ENCODE measurements at regions of chr4 and their contacts with region 1.

Region 1: DNA sequence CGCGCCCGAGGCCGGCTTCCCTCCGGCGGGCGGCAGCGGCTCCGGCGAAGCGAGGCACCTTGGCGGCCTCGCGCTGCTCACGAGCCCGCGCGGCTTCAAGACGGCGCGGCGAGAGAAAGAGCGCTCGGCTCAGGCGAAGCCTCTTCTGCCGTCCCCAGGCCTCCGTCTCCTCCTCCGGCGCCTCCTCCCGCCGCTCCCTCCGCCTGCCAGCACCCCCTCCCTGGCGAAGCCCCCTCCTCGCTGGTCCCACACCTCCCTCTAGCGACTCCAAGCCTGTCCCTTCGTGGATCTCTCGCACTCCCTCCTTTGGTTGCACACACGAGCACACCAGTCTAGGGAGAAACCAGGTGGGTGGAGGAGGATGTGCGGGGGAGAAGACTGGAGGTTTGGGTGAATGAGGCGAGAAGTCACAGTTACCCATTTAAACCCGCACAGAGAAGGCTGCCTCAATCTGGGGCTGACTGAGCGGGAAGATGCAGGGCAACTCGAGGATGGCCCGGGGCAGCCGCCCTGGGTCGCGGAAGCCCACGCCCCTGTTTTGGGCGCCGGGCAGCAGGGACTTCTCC is at the start of gene CAMK2D:
- DNase-seq: peak; percentile 91
- H3K4me3 ChIP-seq: peak within 1 kb of the TSS; percentile 93 to 98 (median 97)
- H3K27ac ChIP-seq: peak within 1 kb of the TSS; percentile 84
- H3K4me1 ChIP-seq: peaks cover 21% of the 10 kb centered on the region
- H3K27me3 ChIP-seq: no peaks in the 10 kb centered on the region
- CTCF ChIP-seq: peak; percentile 35 to 72
- POLR2A ChIP-seq: peak; percentile 51
- total RNA-seq, gene CAMK2D: 23.0 and 30.7 TPM in 2 replicates

Region 2: DNA sequence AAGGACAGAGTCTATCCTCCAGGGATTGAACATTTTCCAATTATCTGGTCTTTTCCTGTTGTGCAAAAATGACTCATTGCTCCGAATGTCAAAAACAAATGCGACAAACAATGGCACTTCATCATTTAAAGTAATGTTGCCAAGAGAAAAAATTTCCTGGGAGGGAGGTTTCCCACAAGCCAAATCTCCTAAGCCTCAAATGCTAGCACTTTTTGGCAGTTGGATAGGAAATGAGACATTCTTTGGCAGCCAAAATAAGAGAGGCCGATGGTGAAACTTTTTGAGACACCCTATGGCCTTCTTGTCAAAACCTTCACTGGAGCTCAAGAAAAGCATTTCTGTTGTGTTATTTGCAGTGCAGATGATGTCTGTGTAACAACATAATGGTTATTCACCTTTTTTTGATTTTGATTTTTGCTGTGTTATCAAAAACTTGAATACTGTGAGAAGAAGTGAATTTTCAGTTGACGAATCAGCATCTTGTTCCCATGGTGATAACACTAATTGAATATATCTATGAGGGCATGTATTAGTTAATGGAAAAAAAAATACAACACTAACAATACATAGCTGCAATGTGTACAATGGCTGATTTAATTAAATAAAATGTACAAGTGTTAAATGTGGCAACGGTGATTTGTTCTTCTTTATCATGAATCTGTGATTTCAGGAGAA is 378.5 kb before region 1 on chr4:
- CTCF ChIA-PET with region 1: no interaction called
- POLR2A ChIA-PET with region 1: no interaction called
- dilution Hi-C with region 1: no loop called
- intact Hi-C with region 1: loop called (anchors 1 kb)
- DNase-seq: peak; percentile 82
- H3K4me3 ChIP-seq: no peak overlapping the region
- H3K27ac ChIP-seq: peak overlapping the region; percentile 57
- H3K4me1 ChIP-seq: peaks cover 29% of the 10 kb centered on the region
- H3K27me3 ChIP-seq: no peaks in the 10 kb centered on the region
- CTCF ChIP-seq: no peak
- POLR2A ChIP-seq: no peak

Region 3: DNA sequence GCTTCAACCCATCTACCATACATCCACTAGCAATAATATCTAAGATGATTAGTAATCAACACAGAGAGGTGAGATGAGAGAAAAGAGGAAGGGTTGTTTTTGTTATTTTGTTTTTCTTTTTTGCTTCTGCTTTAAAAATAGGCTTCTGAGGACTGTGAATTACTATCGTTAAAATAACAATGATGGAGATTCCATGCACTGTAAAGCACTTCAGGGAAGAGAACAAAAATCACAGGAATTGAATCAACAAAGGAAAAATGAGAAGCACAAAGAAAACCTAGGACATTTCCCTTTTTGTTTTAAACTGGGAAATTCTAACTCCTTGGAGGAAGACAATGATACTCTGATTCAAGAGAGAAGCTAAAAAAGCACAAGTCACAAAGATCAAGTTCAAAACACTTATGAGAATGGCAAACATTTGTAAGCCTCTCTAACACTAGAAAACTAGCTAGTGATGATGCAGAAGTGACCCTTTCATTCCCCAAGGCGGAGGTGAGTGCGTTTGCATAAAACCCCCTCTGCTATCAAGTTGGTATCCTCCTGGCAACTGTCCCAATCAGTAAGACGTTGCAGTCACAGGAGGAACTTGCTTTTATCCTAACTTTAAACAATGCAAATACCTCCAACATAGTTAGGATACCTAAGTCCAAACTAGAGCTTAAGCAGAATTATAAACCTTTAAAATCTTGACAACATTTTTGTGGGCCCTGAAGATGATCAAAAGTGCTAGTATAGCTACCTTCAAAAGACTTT is 308.7 kb before region 1 on chr4:
- CTCF ChIA-PET with region 1: no interaction called
- POLR2A ChIA-PET with region 1: no interaction called
- dilution Hi-C with region 1: no loop called
- intact Hi-C with region 1: loop called (anchors 5 kb)
- DNase-seq: peak; percentile 95
- H3K4me3 ChIP-seq: peak overlapping the region in 1 of 3 experiments; percentile 29
- H3K27ac ChIP-seq: peak overlapping the region; percentile 78
- H3K4me1 ChIP-seq: peaks cover 17% of the 10 kb centered on the region
- H3K27me3 ChIP-seq: no peaks in the 10 kb centered on the region
- CTCF ChIP-seq: no peak
- POLR2A ChIP-seq: peak; percentile 25

Region 4: DNA sequence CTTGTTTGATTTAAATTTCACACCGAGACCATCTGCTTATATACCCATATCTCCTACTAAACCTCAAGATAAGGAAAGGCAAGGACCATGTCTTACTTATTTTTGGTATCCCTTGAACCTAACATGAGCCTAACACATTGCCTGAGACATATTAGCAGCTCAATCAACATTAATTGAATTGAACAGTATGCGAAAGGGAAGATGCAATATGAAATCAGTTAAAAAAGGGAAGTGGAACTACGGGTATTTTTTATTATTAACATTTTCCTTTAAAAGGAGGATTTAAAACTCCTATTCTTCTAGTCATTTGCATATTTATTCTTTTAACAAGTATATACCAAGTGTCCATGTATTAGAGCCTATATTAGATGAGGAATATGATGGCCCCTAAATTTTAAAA is 197.2 kb before region 1 on chr4:
- CTCF ChIA-PET with region 1: no interaction called
- POLR2A ChIA-PET with region 1: no interaction called
- dilution Hi-C with region 1: no loop called
- intact Hi-C with region 1: loop called (anchors 1 kb)
- DNase-seq: no peak
- H3K4me3 ChIP-seq: no peak overlapping the region
- H3K27ac ChIP-seq: no peak overlapping the region
- H3K4me1 ChIP-seq: peaks cover 18% of the 10 kb centered on the region
- H3K27me3 ChIP-seq: no peaks in the 10 kb centered on the region
- CTCF ChIP-seq: no peak
- POLR2A ChIP-seq: no peak

Region 5: GRCh38 chr4:113979148-113979904 is 217.6 kb after region 1 on chr4 and contains the start of gene ARSJ:
- CTCF ChIA-PET with region 1: interaction called, 3 read pairs
- POLR2A ChIA-PET with region 1: no interaction called
- dilution Hi-C with region 1: no loop called
- intact Hi-C with region 1: loop called (anchors 1 kb)
- DNase-seq: peak; percentile 82
- H3K4me3 ChIP-seq: peak within 1 kb of the TSS; percentile 92 to 98 (median 97)
- H3K27ac ChIP-seq: peak within 1 kb of the TSS; percentile 92
- H3K4me1 ChIP-seq: peaks cover 12% of the 10 kb centered on the region
- H3K27me3 ChIP-seq: no peaks in the 10 kb centered on the region
- CTCF ChIP-seq: peak in 1 of 2 donors; percentile 3
- POLR2A ChIP-seq: peak; percentile 86
- total RNA-seq, gene ARSJ: 44.0 and 50.0 TPM in 2 replicates

Region 6: DNA sequence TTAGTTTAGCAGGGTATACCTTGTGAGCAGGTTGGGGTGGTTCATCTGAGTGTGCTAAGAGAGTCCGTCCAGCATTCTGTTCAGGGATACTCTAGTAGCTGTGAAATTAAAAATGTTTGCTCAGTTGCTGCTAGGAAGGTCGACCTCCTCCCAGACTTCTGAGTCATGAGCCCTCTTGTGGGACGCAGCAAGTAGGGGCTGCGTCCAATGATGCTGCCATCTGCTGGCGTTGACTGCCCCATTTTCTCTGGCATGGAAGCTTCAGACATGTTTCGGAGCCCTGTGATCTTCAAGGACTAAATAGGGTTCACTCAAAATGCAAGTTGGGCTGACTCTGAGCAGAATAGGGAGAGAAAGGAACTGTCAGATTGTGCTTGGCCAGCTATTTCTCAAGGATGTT is 418.8 kb after region 1 on chr4:
- CTCF ChIA-PET with region 1: no interaction called
- POLR2A ChIA-PET with region 1: no interaction called
- dilution Hi-C with region 1: no loop called
- intact Hi-C with region 1: loop called (anchors 5 kb)
- DNase-seq: peak; percentile 87
- H3K4me3 ChIP-seq: no peak overlapping the region
- H3K27ac ChIP-seq: no peak overlapping the region
- H3K4me1 ChIP-seq: no peaks in the 10 kb centered on the region
- H3K27me3 ChIP-seq: no peaks in the 10 kb centered on the region
- CTCF ChIP-seq: peak; percentile 69 to 79
- POLR2A ChIP-seq: no peak